Sigmoid colon (tissue), 7 donors: ENCODE measurements at regions of chr5 and their contacts with region 1.

Region 1: GRCh38 chr5:132227485-132228240 is at the start of gene P4HA2:
- DNase-seq: peak; percentile 93
- H3K4me3 ChIP-seq: peak within 1 kb of the TSS; percentile 46 to 78 (median 74)
- H3K27ac ChIP-seq: peak within 1 kb of the TSS; percentile 87 to 92 (median 91)
- H3K4me1 ChIP-seq: peaks cover 0 to 52% (median 50%) of the 10 kb centered on the region in 4 donors
- H3K27me3 ChIP-seq: no peaks in the 10 kb centered on the region
- CTCF ChIP-seq: peak in 3 of 4 experiments; percentile 19 to 49 (median 25)
- EP300 ChIP-seq: no peak
- POLR2A ChIP-seq: peak in 1 of 2 donors; percentile 73
- total RNA-seq, gene P4HA2: 23.9 to 35.2 (median 28.9) TPM

Region 2: GRCh38 chr5:132260714-132261551 is 33.3 kb after region 1 on chr5:
- intact Hi-C with region 1: loop called (anchors 1 kb)
- DNase-seq: peak; percentile 92
- H3K4me3 ChIP-seq: peak overlapping the region in 2 of 4 donors; percentile 7 to 91
- H3K27ac ChIP-seq: peak overlapping the region; percentile 97 to 99 (median 98)
- H3K4me1 ChIP-seq: peaks cover 0 to 83% (median 80%) of the 10 kb centered on the region in 4 donors
- H3K27me3 ChIP-seq: no peaks in the 10 kb centered on the region
- CTCF ChIP-seq: no peak
- EP300 ChIP-seq: peak in 1 of 4 donors; percentile 30
- POLR2A ChIP-seq: no peak